Right ventricle myocardium superior (tissue), 1 donor: ENCODE measurements at regions of chr22 and their contacts with region 1.

Region 1: GRCh38 chr22:28480000-28480715 is 199.5 kb downstream of the TTC28 start:
- DNase-seq: no peak
- ATAC-seq: no peak

Region 2: GRCh38 chr22:28505416-28506149 is 25.4 kb after region 1 on chr22:
- intact Hi-C with region 1: loop called (anchors 2 kb)
- DNase-seq: no peak
- ATAC-seq: no peak